ENCODE measurements at regions of chr19 and their contacts with region 1.

Region 1: DNA sequence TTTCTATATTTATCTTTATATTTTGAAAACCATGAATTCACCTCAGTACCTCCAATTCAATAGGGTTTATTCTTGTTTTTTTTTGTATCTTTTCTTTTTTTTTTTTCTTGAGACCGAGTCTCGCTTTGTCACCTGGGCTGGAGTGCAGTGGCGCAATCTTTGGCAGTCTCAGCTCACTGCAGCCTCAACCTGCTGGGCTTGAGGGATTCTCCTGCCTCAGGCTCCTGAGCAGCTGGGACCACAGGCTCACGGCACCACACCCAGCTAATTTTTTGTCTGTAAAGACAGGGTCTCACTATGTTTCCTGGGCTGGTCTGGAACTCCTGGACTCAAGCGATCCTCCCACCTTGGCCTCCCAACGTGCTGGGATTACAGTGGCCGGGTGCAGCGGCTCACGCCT is 23.1 kb upstream of the EVI5L start:
- DNase-seq: no peak
- H3K4me3 Mint-ChIP-seq: no peak overlapping the region
- H3K27ac Mint-ChIP-seq: no peak overlapping the region
- H3K4me1 Mint-ChIP-seq: peaks cover 12% of the 10 kb centered on the region
- H3K27me3 Mint-ChIP-seq: peaks cover 49% of the 10 kb centered on the region

Region 2: GRCh38 chr19:7492142-7492541 is 314.7 kb before region 1 on chr19:
- CTCF ChIA-PET with region 1: no interaction called
- POLR2A ChIA-PET with region 1: no interaction called
- intact Hi-C with region 1: loop called (anchors 2 kb)
- DNase-seq: peak; percentile 83
- H3K4me3 Mint-ChIP-seq: no peak overlapping the region
- H3K27ac Mint-ChIP-seq: peak overlapping the region; percentile 25
- H3K4me1 Mint-ChIP-seq: peaks cover 28% of the 10 kb centered on the region
- H3K27me3 Mint-ChIP-seq: peaks cover 4% of the 10 kb centered on the region

Region 3: GRCh38 chr19:7751157-7751783 is 55.6 kb before region 1 on chr19:
- CTCF ChIA-PET with region 1: no interaction called
- POLR2A ChIA-PET with region 1: no interaction called
- intact Hi-C with region 1: loop called (anchors 1 kb)
- DNase-seq: peak; percentile 67
- H3K4me3 Mint-ChIP-seq: no peak overlapping the region
- H3K27ac Mint-ChIP-seq: peak overlapping the region; percentile 35
- H3K4me1 Mint-ChIP-seq: peaks cover 28% of the 10 kb centered on the region
- H3K27me3 Mint-ChIP-seq: peaks cover 22% of the 10 kb centered on the region

Region 4: GRCh38 chr19:7772752-7773291 is 34.1 kb before region 1 on chr19:
- CTCF ChIA-PET with region 1: no interaction called
- POLR2A ChIA-PET with region 1: no interaction called
- intact Hi-C with region 1: loop called (anchors 1 kb)
- DNase-seq: peak; percentile 63
- H3K4me3 Mint-ChIP-seq: peak overlapping the region; percentile 41
- H3K27ac Mint-ChIP-seq: peak overlapping the region; percentile 61
- H3K4me1 Mint-ChIP-seq: peaks cover 18% of the 10 kb centered on the region
- H3K27me3 Mint-ChIP-seq: peaks cover 34% of the 10 kb centered on the region

Region 5: DNA sequence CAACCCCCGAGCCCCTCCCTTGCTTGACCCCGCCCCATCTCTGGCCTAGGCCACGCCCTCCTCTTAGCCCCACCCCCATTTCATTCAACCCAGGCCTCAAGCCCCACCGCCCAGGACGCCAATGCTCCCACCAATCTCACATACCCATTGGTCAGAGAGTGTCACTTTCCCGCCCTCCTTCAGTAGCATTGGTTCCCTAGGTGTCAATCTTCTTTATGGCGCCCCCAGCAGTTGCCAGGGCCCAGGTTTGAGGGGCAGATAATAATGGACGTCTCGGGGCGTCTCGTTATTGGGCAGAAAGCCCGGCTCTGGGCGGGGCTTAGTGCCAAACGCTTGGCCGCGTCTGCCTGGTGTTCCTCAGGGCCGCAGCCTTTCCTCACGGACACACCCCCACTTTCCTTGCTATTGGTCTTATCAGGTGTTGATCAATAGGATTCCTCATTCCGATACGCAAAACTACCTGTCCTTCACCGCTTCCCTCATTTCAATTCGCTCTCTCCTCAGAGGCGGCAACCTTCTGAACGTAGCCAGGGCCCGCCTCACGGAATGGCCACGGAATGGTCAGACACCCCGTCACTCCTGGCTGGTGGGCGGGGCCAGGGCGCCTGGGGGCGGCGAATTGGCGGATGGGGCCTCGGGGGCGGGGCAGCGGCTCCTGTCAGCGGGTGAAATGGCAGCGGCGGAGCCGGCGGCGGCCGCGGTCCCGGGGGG is 22.8 kb after region 1 on chr19 and contains the start of gene EVI5L:
- CTCF ChIA-PET with region 1: no interaction called
- POLR2A ChIA-PET with region 1: no interaction called
- intact Hi-C with region 1: loop called (anchors 1 kb)
- DNase-seq: peak; percentile 99
- H3K4me3 Mint-ChIP-seq: peak within 1 kb of the TSS; percentile 81
- H3K27ac Mint-ChIP-seq: peak within 1 kb of the TSS; percentile 55
- H3K4me1 Mint-ChIP-seq: peaks cover 17% of the 10 kb centered on the region
- H3K27me3 Mint-ChIP-seq: peaks cover 3% of the 10 kb centered on the region
- total RNA-seq, gene EVI5L: 5.0 to 5.6 TPM